Activated CD4-positive, alpha-beta memory T cell treated with anti-CD3 and anti-CD28 coated beads, Interleukin-2, amount 10 ng/mL, durations not matched to agents 7 days and 5 days (primary cell): ENCODE measurements at regions of chr17 and their contacts with region 1.

Region 1: DNA sequence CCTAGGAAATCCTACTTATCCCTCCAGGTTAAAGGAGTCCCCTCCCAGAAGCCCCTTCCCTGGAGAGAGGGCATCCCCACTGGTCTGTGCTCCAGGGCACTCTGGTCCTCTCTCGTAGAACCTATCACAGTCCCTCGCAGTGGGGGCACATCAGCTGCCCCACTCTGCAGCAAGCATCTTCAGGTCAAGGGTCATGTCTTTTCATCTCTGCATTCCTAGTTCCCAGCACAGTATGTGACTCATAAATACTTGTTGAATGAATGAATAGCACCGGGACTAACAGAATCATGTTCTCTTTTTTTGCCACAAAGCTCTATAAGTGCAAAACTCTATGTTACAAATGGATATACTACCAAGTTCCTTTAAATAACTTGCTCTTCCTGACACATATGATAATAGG is 36.0 kb downstream of the RNF157 start:
- DNase-seq: no peak
- H3K4me3 Mint-ChIP-seq: no peak overlapping the region
- H3K27ac Mint-ChIP-seq: no peak overlapping the region
- H3K4me1 Mint-ChIP-seq: peaks cover 68% of the 10 kb centered on the region
- H3K27me3 Mint-ChIP-seq: no peaks in the 10 kb centered on the region

Region 2: DNA sequence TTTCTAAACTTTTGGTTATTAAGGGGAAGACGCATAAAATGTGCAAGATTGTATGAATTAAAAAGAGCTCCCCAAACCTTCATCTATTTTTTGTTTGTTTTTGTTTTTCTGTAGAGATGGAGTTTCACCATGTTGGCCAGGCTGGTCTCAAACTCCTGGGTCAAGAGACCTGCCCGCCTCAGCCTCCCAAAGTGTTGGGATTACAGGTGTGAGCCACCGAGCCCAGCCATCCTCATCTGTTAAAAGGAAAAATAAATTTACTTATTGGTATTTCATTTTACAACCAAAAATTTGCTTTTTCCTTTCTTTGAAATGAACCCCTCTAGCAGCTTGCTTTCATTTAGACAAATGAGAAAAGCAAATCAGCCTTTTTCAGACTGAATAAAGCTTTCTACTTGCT is 12.8 kb after region 1 on chr17:
- CTCF ChIA-PET with region 1: interaction called, 3 read pairs
- POLR2A ChIA-PET with region 1: interaction called, 14 read pairs
- DNase-seq: no peak
- H3K4me3 Mint-ChIP-seq: no peak overlapping the region
- H3K27ac Mint-ChIP-seq: no peak overlapping the region
- H3K4me1 Mint-ChIP-seq: peaks cover 39% of the 10 kb centered on the region
- H3K27me3 Mint-ChIP-seq: no peaks in the 10 kb centered on the region

Region 3: GRCh38 chr17:76240461-76241203 is 36.4 kb after region 1 on chr17 and contains the start of gene RNF157:
- CTCF ChIA-PET with region 1: interaction called, 3 read pairs
- POLR2A ChIA-PET with region 1: interaction called, 30 read pairs
- DNase-seq: peak; percentile 73
- H3K4me3 Mint-ChIP-seq: peak within 1 kb of the TSS; percentile 81
- H3K27ac Mint-ChIP-seq: peak within 1 kb of the TSS; percentile 85
- H3K4me1 Mint-ChIP-seq: peaks cover 74% of the 10 kb centered on the region
- H3K27me3 Mint-ChIP-seq: peaks cover 7% of the 10 kb centered on the region
- total RNA-seq, gene RNF157: 79.8 to 83.9 TPM

Region 4: DNA sequence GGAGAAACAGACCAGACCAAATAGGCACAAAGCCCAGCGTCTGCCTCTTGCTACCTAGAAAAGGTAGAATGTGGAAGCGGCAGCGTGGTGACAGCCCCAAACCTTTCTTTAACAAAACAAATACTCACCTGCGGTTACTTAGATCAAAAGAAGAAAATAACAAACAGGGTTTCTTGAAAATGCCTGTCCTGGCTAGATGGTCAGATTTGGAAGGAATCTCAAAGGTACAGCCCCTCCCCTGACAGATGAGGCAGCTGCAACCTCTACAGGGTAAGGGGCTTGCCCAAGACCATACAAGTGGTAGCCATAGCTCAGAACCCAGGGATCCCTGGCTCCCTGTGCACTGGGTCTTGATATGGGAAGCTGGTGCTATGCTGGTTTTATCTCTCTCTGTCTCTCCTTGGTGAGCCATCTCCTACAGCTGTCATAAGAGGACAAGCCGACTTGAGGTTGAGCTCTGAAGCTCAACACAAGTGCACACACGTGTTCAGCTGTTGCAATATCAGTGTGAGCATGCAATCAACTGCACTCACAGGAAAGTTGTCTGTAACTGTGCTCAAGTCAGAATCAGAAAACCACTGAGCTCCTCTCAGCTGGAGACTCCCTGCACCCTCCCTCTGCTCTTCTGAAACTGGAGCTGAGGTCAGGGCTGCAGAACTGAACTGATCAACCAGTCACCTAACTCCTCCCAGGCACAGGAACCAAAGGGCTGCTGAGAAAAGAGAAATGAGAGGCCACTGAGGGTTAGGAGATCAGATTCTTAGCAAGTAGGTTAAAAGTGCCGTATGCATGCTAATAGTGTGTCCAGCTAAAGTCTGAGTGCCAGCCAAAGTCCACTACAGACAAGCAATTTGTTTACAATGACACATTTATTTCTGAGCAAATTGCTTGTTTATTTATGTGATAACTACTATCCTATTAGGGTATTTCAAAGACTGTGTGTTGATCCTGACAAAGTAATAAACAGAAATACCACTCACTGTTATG is 42.1 kb after region 1 on chr17:
- CTCF ChIA-PET with region 1: interaction called, 3 read pairs
- POLR2A ChIA-PET with region 1: interaction called, 30 read pairs
- DNase-seq: peak; percentile 87
- H3K4me3 Mint-ChIP-seq: peak overlapping the region; percentile 32
- H3K27ac Mint-ChIP-seq: peak overlapping the region; percentile 94
- H3K4me1 Mint-ChIP-seq: peaks cover 82% of the 10 kb centered on the region
- H3K27me3 Mint-ChIP-seq: peaks cover 5% of the 10 kb centered on the region

Region 5: GRCh38 chr17:76252040-76252954 is 48.0 kb after region 1 on chr17:
- CTCF ChIA-PET with region 1: interaction called, 4 read pairs
- POLR2A ChIA-PET with region 1: interaction called, 30 read pairs
- DNase-seq: peak; percentile 66
- H3K4me3 Mint-ChIP-seq: peak overlapping the region; percentile 72
- H3K27ac Mint-ChIP-seq: peak overlapping the region; percentile 97
- H3K4me1 Mint-ChIP-seq: peaks cover 73% of the 10 kb centered on the region
- H3K27me3 Mint-ChIP-seq: no peaks in the 10 kb centered on the region